Activated CD4-positive, alpha-beta T cell treated with anti-CD3 and anti-CD28 coated beads for 36 hours (primary cell): ENCODE measurements at regions of chr9 and their contacts with region 1.

Region 1: DNA sequence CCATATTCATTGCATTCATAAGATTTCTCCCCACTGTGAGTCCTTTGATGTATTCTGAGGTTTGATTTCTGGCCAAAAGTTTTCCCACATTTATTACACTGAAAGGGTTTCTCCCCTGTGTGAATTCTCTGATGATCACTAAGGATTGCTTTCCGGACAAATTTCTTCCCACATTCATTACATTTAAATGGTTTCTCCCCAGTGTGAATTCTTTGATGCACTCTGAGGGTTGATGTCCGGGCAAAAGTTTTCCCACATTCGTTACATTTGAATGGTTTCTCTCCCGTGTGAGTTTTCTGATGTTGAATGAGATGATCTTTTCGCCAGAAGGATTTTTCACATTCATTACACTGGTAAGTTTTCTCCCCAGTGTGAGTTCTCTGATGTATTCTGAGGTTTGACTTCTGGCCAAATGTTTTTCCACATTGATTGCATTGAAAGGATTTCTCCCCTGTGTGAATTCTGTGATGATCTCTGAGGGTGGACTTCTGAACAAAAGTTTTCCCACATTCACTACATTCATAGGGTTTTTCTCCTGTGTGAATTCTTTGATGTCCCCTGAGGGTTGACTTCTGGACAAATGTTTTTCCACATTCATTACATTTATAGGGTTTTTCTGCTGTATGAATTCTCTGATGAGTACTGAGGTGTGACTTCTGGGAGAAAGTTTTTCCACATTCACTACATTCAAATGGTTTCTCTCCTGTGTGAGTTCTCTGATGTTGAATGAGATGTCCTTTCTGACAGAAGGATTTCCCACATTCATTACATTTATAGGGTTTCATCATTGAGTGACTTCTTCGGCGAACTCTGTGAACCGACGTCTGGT is 18.8 kb downstream of the ZNF510 start:
- DNase-seq: no peak
- ATAC-seq: no peak
- H3K4me3 Mint-ChIP-seq: no peak overlapping the region
- H3K27ac Mint-ChIP-seq: no peak overlapping the region
- H3K4me1 Mint-ChIP-seq: no peaks in the 10 kb centered on the region
- H3K27me3 Mint-ChIP-seq: no peaks in the 10 kb centered on the region

Region 2: GRCh38 chr9:96551403-96551802 is 207.7 kb before region 1 on chr9:
- CTCF ChIA-PET with region 1: no interaction called
- POLR2A ChIA-PET with region 1: no interaction called
- intact Hi-C with region 1: no loop called
- DNase-seq: peak; percentile 33
- ATAC-seq: no peak
- H3K4me3 Mint-ChIP-seq: no peak overlapping the region
- H3K27ac Mint-ChIP-seq: no peak overlapping the region
- H3K4me1 Mint-ChIP-seq: peaks cover 46% of the 10 kb centered on the region
- H3K27me3 Mint-ChIP-seq: peaks cover 2% of the 10 kb centered on the region

Region 3: GRCh38 chr9:96818535-96818934 is 59.5 kb after region 1 on chr9:
- CTCF ChIA-PET with region 1: no interaction called
- POLR2A ChIA-PET with region 1: no interaction called
- intact Hi-C with region 1: loop called (anchors 2 to 10 kb)
- DNase-seq: no peak
- ATAC-seq: no peak
- H3K4me3 Mint-ChIP-seq: no peak overlapping the region
- H3K27ac Mint-ChIP-seq: no peak overlapping the region
- H3K4me1 Mint-ChIP-seq: no peaks in the 10 kb centered on the region
- H3K27me3 Mint-ChIP-seq: no peaks in the 10 kb centered on the region

Region 4: GRCh38 chr9:96868709-96869108 is 109.7 kb after region 1 on chr9:
- CTCF ChIA-PET with region 1: no interaction called
- POLR2A ChIA-PET with region 1: no interaction called
- intact Hi-C with region 1: no loop called
- DNase-seq: no peak
- ATAC-seq: no peak
- H3K4me3 Mint-ChIP-seq: no peak overlapping the region
- H3K27ac Mint-ChIP-seq: no peak overlapping the region
- H3K4me1 Mint-ChIP-seq: peaks cover under 1% of the 10 kb centered on the region
- H3K27me3 Mint-ChIP-seq: peaks cover 12% of the 10 kb centered on the region